ENCODE measurements at regions of chr16 and their contacts with region 1.

Region 1: DNA sequence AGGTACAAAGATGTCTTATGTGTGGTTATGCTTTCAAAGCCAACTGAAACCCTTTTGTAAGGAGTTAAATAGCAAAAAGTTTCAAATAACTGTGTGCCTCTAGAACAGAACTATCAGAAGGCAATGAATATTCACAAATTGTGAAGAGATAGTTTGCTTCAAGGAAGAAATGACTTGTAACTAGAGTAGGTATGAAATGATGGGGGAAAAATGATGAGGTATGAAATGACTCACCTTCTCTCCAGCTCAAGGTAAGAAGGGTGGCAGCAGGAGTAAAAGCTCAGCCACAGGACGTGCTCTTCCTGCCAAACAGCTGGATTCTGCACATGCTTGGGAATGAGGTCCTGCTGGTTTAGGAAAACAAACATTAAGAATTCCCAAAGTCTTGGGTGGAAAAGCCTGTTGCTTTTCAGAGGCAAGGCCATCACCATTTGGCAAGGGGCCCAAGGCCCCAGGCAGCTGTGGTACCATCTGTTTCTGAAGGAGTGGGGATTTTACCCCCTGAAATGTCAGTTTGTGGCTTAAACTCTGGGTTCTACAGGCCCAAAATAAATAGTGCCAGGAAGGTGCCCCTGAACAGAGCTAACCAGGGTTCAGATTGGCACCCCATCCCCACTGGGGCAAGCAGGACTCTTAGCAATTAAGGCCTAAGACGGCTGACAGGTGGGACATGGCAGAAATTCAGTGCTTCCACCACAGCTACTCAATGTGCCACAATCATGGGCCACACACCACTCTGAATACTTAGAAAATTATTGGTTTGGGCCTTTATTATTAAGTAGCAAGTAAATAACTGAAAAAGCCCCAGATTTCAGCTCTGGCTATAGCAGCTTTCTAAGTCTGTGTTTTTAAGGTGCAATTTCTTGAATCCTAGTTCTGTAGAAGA is 13.3 kb downstream of the HERPUD1 start:
- DNase-seq: peak; percentile 61
- ATAC-seq: peak; percentile 34
- H3K4me3 ChIP-seq: no peak overlapping the region
- H3K27ac ChIP-seq: peak overlapping the region; percentile 40; the same call in 1 of the 2 replicates
- H3K4me1 ChIP-seq: peaks cover 47% of the 10 kb centered on the region
- H3K27me3 ChIP-seq: no peaks in the 10 kb centered on the region
- CTCF ChIP-seq: no peak
- EP300 ChIP-seq: peak in 1 of 2 experiments; percentile 55; a peak in 1 of 4 replicates
- POLR2A ChIP-seq: peak; percentile 76
- RAD21 ChIP-seq: no peak

Region 2: DNA sequence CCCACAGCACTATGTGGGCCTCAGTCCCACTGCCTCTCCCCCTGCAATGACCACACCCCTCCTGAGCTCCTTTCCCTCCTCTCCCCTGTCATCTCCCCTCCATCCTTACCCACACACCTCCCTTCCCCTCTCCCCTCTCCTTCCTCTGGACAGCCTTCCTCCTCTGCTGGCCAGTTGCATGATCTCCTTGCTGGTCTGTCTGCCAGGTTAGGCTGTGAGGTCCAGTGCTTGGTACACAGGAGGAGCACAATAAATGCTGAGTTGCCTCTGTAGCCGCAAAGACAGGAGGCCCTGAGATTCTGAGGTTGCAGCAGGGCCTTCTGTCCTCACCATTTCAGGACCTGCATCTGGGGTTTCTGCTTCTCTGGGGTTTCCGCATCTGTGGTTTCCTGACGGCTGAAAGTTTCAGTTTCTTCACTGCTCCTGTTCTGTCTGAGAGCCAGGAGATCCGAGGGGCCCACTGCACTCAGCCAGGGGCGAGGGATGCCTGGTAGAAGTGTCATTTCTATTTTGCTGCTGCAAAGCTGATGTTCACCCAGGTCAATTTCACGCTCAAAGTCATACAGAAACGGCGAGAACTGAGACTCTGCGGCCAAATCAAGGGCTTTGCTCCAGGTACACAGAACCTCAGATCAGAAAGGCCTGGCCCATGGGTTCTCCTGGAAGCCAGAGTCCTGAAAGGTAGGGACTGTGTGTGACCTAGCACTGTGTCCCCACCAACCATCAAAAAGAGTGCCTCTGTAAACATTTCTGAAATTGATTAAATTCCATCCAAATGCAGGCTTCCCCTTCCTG is 84.8 kb before region 1 on chr16:
- CTCF ChIA-PET with region 1: interaction called, 247 read pairs
- POLR2A ChIA-PET with region 1: interaction called, 6 read pairs
- RAD21 ChIA-PET with region 1: interaction called, 126 read pairs
- SMC1A ChIA-PET with region 1: interaction called, 86 read pairs
- in situ Hi-C with region 1: loop called (anchors 5 kb)
- intact Hi-C with region 1: no loop called
- DNase-seq: peak; percentile 75
- ATAC-seq: peak; percentile 93
- H3K4me3 ChIP-seq: 0 out of 2 replicates have a peak overlapping the region, but pooled peaks have one; percentile 13
- H3K27ac ChIP-seq: peak overlapping the region; percentile 52
- H3K4me1 ChIP-seq: peaks cover 33% of the 10 kb centered on the region
- H3K27me3 ChIP-seq: no peaks in the 10 kb centered on the region
- CTCF ChIP-seq: no peak
- EP300 ChIP-seq: no peak
- POLR2A ChIP-seq: no peak
- RAD21 ChIP-seq: no peak; the same call in 1 of the 2 replicates

Measured in GM12878 (cell line).